ENCODE measurements at regions of chr11 and their contacts with region 1.

Region 1: GRCh38 chr11:2741377-2742131 is 41.8 kb upstream of the KCNQ1OT1 start:
- DNase-seq: no peak
- CTCF ChIP-seq: no peak

Region 2: DNA sequence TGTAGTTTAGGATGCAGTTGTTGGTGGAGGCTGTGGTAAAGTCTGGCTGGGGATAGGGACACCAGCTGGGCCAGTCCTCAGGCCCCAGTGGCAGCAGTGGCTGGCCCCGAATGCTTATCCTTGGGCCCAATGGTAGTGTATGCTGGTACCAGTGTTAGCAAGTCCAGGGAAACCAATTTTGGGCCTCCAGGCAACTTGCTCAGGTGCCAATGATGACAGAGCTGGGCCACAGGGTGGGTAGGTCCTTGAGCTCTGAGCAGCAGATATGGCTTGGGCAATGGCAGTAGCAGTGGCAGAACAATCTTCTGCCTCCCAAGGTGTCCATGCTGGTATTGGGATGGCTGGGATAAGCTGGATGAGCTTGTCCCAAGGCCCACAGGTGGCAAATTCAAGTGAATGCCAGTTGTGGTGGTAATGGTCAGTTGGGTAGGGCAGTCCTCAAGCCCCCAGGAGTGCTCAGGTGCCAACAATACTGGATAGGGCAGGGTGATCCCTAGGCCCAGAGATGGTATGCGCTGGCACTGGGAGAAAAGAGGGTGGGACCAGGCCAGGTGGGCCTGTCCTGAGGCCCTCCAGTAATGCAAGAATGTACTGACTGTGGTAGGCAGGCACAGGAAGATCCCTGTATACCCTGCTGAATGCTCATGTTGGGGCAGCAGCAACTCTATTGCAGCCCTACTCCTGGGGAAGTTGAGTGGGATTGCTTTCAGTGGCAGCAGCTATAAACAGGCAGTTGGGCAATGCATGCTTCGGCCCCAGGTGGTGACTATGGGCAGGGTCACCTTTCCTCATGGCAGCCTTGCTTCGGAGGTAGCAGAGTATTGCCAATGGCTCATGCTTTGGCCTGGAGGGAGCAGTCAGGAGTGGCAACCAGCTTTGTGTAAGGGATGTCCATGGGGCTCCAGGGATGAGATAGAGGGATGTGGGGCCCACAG is 96.4 kb before region 1 on chr11:
- in situ Hi-C with region 1: loop called (anchors 25 kb)
- DNase-seq: no peak
- CTCF ChIP-seq: no peak

Region 3: DNA sequence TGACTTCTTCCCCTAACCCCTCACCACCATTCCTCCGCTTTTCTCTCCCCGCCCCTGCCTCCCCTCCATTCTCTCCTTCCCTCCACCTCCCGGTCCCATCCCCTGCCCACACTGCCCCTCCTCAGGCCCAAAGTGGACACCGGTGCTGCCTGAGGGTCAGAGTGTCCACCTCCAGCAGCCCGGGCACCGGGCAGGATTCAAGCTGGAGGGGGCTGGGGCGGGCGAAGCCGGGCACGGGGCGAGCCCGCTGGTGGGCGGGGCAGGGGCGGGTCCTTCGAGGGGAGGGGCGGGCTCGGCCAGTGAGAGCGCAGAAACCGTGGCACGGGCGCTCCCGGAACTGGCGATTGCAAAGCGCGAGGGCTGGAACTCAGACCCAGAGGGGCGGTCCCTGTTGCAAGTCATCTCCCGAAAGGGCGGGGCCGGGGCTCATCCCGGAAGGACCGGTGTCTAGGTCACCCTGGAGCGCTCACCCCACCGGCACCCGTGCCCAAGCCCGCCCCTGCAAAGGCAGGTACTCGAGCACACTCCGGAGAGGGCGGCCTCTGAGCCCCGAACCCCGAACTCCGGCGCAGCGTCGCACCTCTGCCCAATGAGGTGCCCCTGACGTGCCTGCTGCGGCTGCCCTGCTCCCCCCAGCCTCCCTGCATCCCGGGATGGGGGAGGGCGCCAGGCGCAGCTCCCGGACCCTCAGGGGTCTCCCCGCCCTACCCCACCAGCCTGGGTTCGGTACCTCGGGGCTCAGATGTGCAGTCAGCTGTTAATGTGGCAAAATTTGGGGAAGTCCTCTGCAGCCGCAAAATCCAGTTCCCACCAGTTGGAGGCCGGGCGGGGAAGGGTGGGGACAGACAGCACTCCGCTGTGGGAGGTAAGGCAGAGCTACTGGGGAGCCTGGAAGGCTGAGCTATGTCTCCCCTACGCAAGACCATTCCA is 160.6 kb after region 1 on chr11:
- in situ Hi-C with region 1: no loop called
- DNase-seq: peak; percentile 99
- CTCF ChIP-seq: no peak

Measured in GM13976 (cell line).